GM12878 (cell line): ENCODE measurements at regions of chr2 and their contacts with region 1.

Region 1: GRCh38 chr2:8378016-8378810 is 303.6 kb upstream of the ID2 start:
- DNase-seq: peak; percentile 63
- ATAC-seq: peak; percentile 88
- H3K4me3 ChIP-seq: no peak overlapping the region
- H3K27ac ChIP-seq: no peak overlapping the region
- H3K4me1 ChIP-seq: peaks cover 33% of the 10 kb centered on the region
- H3K27me3 ChIP-seq: no peaks in the 10 kb centered on the region
- CTCF ChIP-seq: no peak
- EP300 ChIP-seq: peak in 1 of 2 experiments; percentile 42; a peak in 2 of 4 replicates
- POLR2A ChIP-seq: no peak
- RAD21 ChIP-seq: 0 out of 2 replicates have a peak, but pooled peaks have one; percentile 4

Region 2: DNA sequence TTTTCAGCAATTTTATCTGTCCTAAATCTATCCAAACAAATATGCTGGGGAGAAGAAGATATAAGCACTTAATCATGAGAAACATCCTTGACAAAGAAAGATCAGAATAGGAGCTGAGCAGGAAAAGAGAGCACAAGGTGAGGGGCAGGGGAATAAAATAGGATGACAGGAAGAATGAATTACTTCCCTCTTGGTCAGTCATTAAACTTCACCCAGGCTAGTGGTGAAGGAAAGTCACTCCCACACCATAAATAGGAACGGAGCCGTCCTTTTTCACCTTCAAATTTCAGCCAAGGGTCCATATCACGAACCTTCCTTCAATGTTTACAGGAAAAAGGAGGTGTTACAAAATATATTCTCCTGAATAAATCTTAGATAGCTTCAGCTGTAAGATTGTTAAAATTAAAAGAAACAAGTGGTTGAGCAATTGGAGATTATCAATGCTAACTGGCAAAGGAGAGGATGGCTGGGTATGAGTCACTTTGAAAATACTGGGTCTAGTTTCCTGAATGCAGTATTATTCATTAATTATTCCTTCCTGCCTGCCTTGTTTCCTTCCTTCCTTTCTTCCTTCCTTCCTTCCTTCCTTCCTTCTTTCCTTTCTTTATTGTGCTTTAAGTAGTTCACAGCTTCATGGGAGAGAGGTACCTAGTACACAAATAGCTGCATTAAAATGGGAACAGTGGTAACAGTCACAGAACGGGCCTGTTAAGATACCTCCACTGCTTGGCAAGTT is 11.3 kb after region 1 on chr2:
- CTCF ChIA-PET with region 1: interaction called, 5 read pairs
- POLR2A ChIA-PET with region 1: interaction called, 4 read pairs
- RAD21 ChIA-PET with region 1: interaction called, 6 read pairs
- SMC1A ChIA-PET with region 1: interaction called, 35 read pairs
- in situ Hi-C with region 1: no loop called
- intact Hi-C with region 1: no loop called
- DNase-seq: no peak
- ATAC-seq: 0 out of 3 replicates have a peak, but pooled peaks have one; percentile 20
- H3K4me3 ChIP-seq: no peak overlapping the region
- H3K27ac ChIP-seq: no peak overlapping the region
- H3K4me1 ChIP-seq: peaks cover 3% of the 10 kb centered on the region; the same call in 1 of the 2 replicates
- H3K27me3 ChIP-seq: no peaks in the 10 kb centered on the region
- CTCF ChIP-seq: no peak
- EP300 ChIP-seq: no peak
- POLR2A ChIP-seq: no peak
- RAD21 ChIP-seq: no peak

Region 3: GRCh38 chr2:8402222-8402621 is 24.0 kb after region 1 on chr2:
- CTCF ChIA-PET with region 1: interaction called, 3 read pairs
- POLR2A ChIA-PET with region 1: interaction called, 4 read pairs
- RAD21 ChIA-PET with region 1: interaction called, 18 read pairs
- SMC1A ChIA-PET with region 1: interaction called, 43 read pairs
- in situ Hi-C with region 1: no loop called
- intact Hi-C with region 1: loop called (anchors 1 kb)
- DNase-seq: no peak
- ATAC-seq: no peak
- H3K4me3 ChIP-seq: no peak overlapping the region
- H3K27ac ChIP-seq: no peak overlapping the region
- H3K4me1 ChIP-seq: peaks cover 4% of the 10 kb centered on the region
- H3K27me3 ChIP-seq: no peaks in the 10 kb centered on the region
- CTCF ChIP-seq: no peak
- EP300 ChIP-seq: no peak
- POLR2A ChIP-seq: no peak
- RAD21 ChIP-seq: no peak

Region 4: GRCh38 chr2:8441986-8442385 is 63.8 kb after region 1 on chr2:
- CTCF ChIA-PET with region 1: no interaction called
- POLR2A ChIA-PET with region 1: no interaction called
- RAD21 ChIA-PET with region 1: no interaction called
- SMC1A ChIA-PET with region 1: no interaction called
- in situ Hi-C with region 1: no loop called
- intact Hi-C with region 1: no loop called
- DNase-seq: no peak
- ATAC-seq: peak; percentile 89
- H3K4me3 ChIP-seq: no peak overlapping the region
- H3K27ac ChIP-seq: no peak overlapping the region
- H3K4me1 ChIP-seq: peaks cover 14% of the 10 kb centered on the region
- H3K27me3 ChIP-seq: no peaks in the 10 kb centered on the region
- CTCF ChIP-seq: no peak
- EP300 ChIP-seq: peak; percentile 15 to 45; a peak in 2 of 4 replicates
- POLR2A ChIP-seq: no peak
- RAD21 ChIP-seq: no peak